Posterior vena cava (tissue), 2 donors: ENCODE measurements at regions of chr5 and their contacts with region 1.

Region 1: GRCh38 chr5:115309751-115310370 is 13.4 kb upstream of the CCDC112 start:
- DNase-seq: no peak

Region 2: DNA sequence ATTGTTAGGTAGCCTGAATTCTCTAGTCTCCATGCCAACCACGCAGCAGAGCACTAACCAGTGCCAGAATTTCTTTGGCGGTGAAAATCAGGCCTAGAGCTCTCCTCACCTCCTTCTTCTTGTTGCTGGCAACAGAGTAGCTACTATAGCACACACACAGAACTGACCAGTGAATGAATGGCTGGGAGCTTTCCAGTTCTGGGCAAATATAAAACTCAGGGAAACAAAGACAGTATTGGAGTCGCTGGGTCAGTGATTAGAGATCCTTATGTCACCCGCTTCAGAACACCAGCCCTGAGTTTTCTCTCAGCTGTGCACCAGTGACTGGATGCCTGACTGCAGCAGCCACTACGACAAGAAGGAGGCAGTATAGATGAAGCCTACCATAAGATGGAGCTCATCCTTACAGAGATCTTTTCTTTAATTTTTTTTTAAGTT is 261.6 kb after region 1 on chr5:
- intact Hi-C with region 1: loop called in 1 of 2 experiments (anchors 5 kb)
- DNase-seq: no peak

Region 3: GRCh38 chr5:115586601-115587048 is 276.8 kb after region 1 on chr5:
- intact Hi-C with region 1: loop called (anchors 5 kb)
- DNase-seq: no peak